ENCODE measurements at regions of chr7 and their contacts with region 1.

Region 1: DNA sequence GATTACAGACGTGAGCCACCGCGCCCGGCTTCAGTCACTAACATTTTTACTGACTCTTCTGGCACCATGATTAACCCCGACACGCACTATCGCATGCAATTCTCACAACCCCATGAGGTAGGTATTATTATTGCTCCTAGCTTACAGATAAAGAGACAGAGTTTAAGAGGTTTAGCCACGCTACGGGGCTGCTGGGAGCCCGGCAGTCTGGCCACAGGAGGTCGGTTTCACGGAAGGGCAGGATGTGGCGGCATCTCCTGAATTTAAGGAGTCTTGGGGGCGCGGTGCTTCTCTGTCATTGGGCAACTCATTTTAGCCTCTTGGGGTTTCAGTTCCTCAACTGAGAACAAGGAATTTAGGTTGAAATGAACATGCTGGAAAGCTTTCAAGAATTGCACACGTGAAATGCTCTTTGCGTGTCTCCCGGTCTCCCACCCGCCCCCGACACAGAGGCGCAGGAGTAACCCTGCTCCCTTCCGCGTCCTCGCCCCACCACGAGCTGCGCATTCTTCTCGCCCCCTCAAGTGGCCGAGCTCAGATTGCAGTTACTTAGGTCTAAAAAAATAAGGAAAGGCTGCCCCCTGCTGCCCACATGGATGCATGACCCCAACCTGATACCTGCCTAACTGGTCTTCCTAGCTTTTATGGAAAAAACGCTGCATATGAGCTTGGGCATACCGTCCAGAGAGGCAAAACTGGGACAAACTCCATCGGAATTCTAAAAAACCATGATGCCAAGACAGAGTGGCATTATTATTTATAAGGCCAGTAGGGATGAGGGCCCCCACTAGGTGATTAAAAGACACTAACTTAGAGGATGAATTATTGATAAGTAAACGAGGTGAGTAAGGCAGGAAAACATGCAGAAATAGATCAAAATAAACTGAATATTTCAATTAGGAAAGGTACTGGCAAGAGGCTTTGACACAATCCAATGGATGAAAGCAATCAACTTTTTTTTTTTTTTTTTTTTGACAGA is 12.4 kb downstream of the PRSS2 start:
- DNase-seq: peak; percentile 91 to 96 (median 94)
- ATAC-seq: peak; percentile 98
- H3K4me3 ChIP-seq: no peak overlapping the region
- H3K27ac ChIP-seq: no peak overlapping the region
- H3K4me1 ChIP-seq: peaks cover under 1 to 2% of the 10 kb centered on the region in 2 experiments; a peak in 2 of 5 replicates
- H3K27me3 ChIP-seq: peaks cover 6 to 37% of the 10 kb centered on the region in 2 experiments; a peak in 4 of 5 replicates
- CTCF ChIP-seq: peak; percentile 99 to 100 (median 100)
- EP300 ChIP-seq: no peak
- POLR2A ChIP-seq: no peak
- RAD21 ChIP-seq: peak; percentile 99 to 100

Region 2: DNA sequence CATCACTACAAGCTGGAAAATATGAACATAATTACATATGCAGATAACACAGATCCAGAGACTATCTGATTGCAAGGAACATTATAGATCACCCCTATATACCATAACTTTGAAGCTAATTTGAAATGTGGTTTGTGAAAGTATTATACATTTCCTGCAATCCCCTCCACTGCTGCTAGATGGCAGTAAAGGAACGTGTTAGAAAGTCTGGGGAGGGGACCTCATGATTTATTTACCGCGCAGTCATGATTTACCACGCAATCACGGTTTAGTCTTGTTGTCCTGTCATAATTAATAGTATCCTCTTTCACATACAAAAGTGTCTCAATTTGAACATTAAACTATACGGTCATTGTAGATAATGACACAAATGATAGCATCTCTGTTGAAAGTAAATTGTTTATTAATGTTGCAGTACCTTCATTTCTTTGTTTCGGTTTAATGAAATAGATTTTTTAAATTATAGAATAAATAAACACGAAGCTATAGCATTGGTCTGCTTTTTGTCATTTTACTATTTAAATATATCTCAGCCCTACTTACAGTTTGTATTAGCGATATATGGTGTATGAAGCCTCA is 179.3 kb before region 1 on chr7:
- CTCF ChIA-PET with region 1: interaction called, 72 read pairs
- POLR2A ChIA-PET with region 1: no interaction called
- in situ Hi-C with region 1: no loop called
- intact Hi-C with region 1: loop called (anchors 1 kb)
- DNase-seq: peak; percentile 75 to 83 (median 80)
- ATAC-seq: peak; percentile 80
- H3K4me3 ChIP-seq: no peak overlapping the region
- H3K27ac ChIP-seq: no peak overlapping the region
- H3K4me1 ChIP-seq: no peaks in the 10 kb centered on the region; a peak in 1 of 5 replicates
- H3K27me3 ChIP-seq: peaks cover 2 to 10% of the 10 kb centered on the region in 2 experiments; a peak in 2 of 5 replicates
- CTCF ChIP-seq: peak; percentile 85 to 94 (median 90)
- EP300 ChIP-seq: no peak
- POLR2A ChIP-seq: no peak
- RAD21 ChIP-seq: peak; percentile 84 to 93

Region 3: GRCh38 chr7:142632291-142633134 is 150.7 kb before region 1 on chr7:
- CTCF ChIA-PET with region 1: interaction called, 54 read pairs
- POLR2A ChIA-PET with region 1: interaction called, 3 read pairs
- in situ Hi-C with region 1: loop called (anchors 25 kb)
- intact Hi-C with region 1: loop called (anchors 1 kb)
- DNase-seq: peak; percentile 80 to 85 (median 84)
- ATAC-seq: peak; percentile 98
- H3K4me3 ChIP-seq: no peak overlapping the region
- H3K27ac ChIP-seq: no peak overlapping the region
- H3K4me1 ChIP-seq: no peaks in the 10 kb centered on the region
- H3K27me3 ChIP-seq: peaks cover 0 to 5% of the 10 kb centered on the region in 2 experiments; a peak in 3 of 5 replicates
- CTCF ChIP-seq: peak; percentile 89 to 90 (median 89)
- EP300 ChIP-seq: no peak
- POLR2A ChIP-seq: no peak
- RAD21 ChIP-seq: peak; percentile 81 to 83

Region 4: DNA sequence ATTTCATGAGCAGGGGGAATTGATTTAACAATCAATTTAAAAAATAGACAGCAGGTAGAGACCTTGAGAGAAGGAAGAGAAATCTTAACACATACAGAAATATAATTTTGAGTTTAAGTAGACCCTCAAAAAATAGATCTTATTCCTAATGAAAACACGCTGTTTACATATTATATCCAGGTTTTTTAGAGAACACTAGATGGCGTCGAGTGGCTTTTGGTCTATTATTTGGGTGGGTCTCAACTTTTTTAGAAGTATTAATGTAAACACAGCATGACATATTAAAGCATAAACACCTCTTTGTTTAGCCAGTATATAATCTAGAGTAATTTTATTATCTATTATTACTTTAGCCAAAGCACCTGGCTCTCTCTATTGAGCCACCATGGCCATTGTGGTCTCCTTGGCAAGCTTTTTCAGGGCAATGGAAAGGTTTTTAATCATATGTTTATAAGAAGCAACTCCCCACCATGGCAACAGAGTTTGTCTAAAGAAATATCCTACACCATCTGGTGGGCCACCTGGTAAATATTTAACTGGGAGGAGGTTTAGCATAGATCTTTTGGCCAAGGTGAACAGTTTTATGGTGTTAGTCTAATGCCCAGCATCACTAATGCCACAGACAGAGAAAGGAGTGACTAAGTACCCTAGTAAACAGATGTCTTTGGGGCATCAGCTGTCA is 93.6 kb before region 1 on chr7:
- CTCF ChIA-PET with region 1: interaction called, 8 read pairs
- POLR2A ChIA-PET with region 1: no interaction called
- in situ Hi-C with region 1: no loop called
- intact Hi-C with region 1: loop called (anchors 2 kb)
- DNase-seq: peak in 1 of 4 experiments; percentile 7
- ATAC-seq: no peak
- H3K4me3 ChIP-seq: no peak overlapping the region
- H3K27ac ChIP-seq: no peak overlapping the region
- H3K4me1 ChIP-seq: no peaks in the 10 kb centered on the region
- H3K27me3 ChIP-seq: no peaks in the 10 kb centered on the region
- CTCF ChIP-seq: peak in 2 of 3 experiments; percentile 34 to 47; a peak in 3 of 6 replicates
- EP300 ChIP-seq: no peak
- POLR2A ChIP-seq: no peak
- RAD21 ChIP-seq: peak in 1 of 2 experiments; percentile 38; a peak in 2 of 4 replicates

Region 5: DNA sequence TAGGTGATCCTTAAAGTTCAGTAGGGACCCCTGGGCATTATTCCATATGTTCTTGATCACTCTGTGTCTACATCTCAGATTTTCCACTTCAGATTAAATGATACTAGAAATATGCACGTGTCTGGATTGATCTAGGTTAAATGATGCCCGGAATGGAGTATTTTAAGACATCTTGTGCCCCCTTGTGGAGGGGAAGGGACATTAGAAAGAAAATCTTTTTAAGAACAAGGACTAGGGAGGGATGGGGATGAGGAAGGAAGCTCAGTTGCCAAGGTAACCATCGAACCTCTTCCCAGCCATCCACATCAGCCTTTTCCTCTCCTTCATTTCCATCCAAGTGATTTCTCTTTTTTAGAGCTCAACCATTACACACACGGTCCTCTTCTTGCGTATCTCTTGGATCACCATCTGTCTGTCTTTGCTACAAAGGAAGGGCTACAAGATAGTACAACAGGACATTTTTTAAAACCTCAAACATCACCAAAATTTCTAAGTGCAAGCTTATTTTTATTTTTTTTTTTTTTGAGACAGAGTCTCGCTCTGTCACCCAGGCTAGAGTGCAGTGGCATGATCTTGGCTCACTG is 28.0 kb after region 1 on chr7:
- CTCF ChIA-PET with region 1: interaction called, 3 read pairs
- POLR2A ChIA-PET with region 1: no interaction called
- in situ Hi-C with region 1: no loop called
- intact Hi-C with region 1: loop called (anchors 2 kb)
- DNase-seq: peak; percentile 70 to 77 (median 74)
- ATAC-seq: peak; percentile 82
- H3K4me3 ChIP-seq: no peak overlapping the region
- H3K27ac ChIP-seq: no peak overlapping the region
- H3K4me1 ChIP-seq: peaks cover 0 to 44% of the 10 kb centered on the region in 2 experiments; a peak in 3 of 5 replicates
- H3K27me3 ChIP-seq: no peaks in the 10 kb centered on the region; a peak in 1 of 5 replicates
- CTCF ChIP-seq: peak; percentile 67 to 86 (median 83); a peak in 5 of 6 replicates
- EP300 ChIP-seq: no peak
- POLR2A ChIP-seq: no peak
- RAD21 ChIP-seq: peak; percentile 83 to 85

Measured in K562 (cell line).